Posterior vena cava (tissue), 2 donors: ENCODE measurements at regions of chr5 and their contacts with region 1.

Region 1: DNA sequence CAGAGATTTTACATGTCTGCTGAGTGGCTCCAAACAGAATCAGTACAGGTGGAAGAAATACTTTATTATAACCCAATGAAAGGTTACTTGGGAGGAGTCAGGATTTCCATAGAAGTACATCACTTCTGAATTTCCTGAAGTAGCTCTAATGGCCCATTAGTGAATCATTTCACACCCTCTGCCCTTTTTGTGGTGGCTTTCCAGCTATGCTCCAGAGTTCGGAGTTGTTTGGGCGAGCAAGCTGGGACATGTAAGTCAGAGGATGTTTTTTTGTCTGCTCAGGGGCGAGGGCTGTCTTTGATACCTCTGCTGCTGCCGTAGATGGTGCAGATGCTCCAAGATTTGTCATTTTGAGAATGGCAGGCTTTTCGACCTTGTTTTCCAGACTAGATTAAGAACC is 226.1 kb downstream of the GOLPH3 start:
- DNase-seq: no peak

Region 2: GRCh38 chr5:31021181-31021624 is 926.8 kb before region 1 on chr5:
- intact Hi-C with region 1: no loop called
- DNase-seq: no peak

Region 3: GRCh38 chr5:31757806-31758205 is 190.2 kb before region 1 on chr5:
- intact Hi-C with region 1: no loop called
- DNase-seq: no peak

Region 4: DNA sequence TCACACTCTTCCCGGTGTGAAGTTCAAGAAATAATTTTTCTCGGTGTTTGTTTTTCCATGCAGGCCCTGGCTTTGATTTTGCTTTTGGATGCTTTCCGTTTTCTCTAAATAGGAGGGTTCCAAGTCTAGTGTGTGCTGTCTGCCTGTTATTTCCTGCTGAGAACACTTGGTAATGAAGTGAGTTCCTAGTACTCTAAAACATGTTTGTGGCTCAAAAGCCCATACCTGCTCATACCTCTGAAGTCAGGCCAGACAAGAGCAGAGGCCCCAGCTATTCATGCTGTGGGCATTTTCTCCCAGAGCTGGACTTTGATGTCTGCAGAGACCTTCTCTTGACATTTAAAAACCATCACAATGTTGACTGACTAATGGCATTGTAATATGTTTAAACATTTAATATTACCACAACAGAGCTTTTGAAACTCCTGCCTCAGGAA is 14.9 kb after region 1 on chr5:
- intact Hi-C with region 1: loop called in 1 of 2 experiments (anchors 1 kb)
- DNase-seq: no peak

Region 5: GRCh38 chr5:32115985-32116384 is 168.0 kb after region 1 on chr5:
- intact Hi-C with region 1: no loop called
- DNase-seq: no peak

Region 6: DNA sequence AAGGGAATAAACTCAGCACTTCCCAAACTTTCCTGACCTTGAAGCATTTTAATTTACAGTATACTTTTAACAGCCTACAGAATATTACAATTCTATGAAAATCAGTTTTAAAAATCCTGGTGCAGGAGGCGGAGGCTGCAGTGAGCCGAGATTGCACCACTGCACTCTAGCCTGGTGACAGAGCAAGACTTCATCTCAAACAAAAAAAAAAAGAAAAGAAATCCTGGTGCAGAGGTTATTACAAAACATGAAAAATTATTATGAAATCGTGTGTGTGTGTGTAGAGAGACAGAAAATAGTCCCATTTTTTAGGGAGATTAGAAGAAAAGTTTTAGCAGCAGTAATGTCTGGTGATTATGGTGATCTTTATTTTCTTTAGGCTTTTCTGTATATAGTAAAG is 199.2 kb after region 1 on chr5:
- intact Hi-C with region 1: no loop called
- DNase-seq: no peak